Common myeloid progenitor, CD34-positive (primary cell): ENCODE measurements at regions of chr11 and their contacts with region 1.

Region 1: DNA sequence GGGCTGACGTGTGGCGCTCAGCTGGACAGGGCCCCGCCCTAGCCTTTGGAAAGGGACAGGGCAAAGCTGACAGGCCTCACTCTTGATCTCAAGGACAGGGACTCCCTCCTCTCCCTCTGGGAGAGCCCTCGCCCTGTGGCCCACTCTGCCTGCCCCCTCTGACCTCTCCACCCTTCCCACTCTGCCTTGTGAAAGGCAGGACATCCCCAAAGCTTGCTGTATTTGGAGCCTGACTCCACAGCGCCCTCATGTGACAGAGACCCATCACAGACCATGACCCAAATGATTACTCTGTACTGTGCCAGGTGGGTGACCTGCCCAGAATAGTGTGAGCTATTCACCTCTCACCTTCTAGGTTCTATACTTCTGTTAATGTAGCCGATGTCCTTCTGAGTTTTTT is 18.8 kb downstream of the P2RY2 start:
- DNase-seq: peak; percentile 57 to 79 (median 70)
- H3K4me3 ChIP-seq: no peak overlapping the region
- H3K27ac ChIP-seq: no peak overlapping the region
- H3K4me1 ChIP-seq: no peaks in the 10 kb centered on the region
- H3K27me3 ChIP-seq: no peaks in the 10 kb centered on the region

Region 2: DNA sequence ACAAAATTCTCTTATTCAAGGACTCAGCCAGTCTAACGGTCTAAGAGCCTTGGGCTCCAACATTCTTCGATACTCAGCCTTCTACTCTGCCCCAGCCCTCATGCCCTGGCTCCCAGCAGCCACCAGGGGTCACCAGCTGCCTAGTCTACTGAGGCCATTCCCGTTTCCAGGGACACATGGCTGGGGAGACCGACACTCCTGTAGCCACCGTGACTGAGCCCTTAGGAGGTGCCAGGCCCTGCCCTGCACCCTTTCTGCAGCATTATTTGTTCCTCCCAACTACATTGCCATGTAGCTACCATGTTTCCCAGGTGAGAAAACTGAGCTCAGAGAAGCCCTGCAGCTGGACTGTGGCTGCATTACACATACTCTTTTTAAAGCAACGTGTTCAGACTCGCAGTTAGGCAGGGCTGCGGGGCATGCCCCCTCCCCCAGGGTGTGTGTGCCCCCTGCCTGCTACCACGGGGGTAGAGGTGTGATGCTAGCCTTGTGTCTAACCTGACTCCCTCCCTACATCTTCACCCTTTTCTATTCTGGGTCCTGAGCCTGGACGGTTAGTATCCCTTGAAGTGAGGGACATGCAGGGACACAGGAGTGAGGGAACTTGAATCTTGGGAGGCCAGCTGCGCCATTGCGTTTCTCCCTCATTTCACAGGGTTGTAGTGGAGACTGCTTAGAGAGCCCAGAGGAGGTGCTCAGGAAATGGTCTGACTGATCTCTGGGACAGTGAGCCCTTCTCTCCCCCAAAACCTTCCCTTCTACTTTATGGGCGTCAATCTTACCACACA is 405.1 kb before region 1 on chr11:
- CTCF ChIA-PET with region 1: interaction called, 10 read pairs
- POLR2A ChIA-PET with region 1: no interaction called
- DNase-seq: peak; percentile 62 to 81 (median 79)
- H3K4me3 ChIP-seq: no peak overlapping the region
- H3K27ac ChIP-seq: no peak overlapping the region
- H3K4me1 ChIP-seq: peaks cover 0 to 11% (median 4%) of the 10 kb centered on the region in 4 experiments
- H3K27me3 ChIP-seq: no peaks in the 10 kb centered on the region

Region 3: GRCh38 chr11:72985645-72986044 is 251.2 kb before region 1 on chr11:
- CTCF ChIA-PET with region 1: no interaction called
- POLR2A ChIA-PET with region 1: no interaction called
- DNase-seq: no peak
- H3K4me3 ChIP-seq: no peak overlapping the region
- H3K27ac ChIP-seq: no peak overlapping the region
- H3K4me1 ChIP-seq: peaks cover 0 to 20% (median 8%) of the 10 kb centered on the region in 4 experiments
- H3K27me3 ChIP-seq: no peaks in the 10 kb centered on the region

Region 4: DNA sequence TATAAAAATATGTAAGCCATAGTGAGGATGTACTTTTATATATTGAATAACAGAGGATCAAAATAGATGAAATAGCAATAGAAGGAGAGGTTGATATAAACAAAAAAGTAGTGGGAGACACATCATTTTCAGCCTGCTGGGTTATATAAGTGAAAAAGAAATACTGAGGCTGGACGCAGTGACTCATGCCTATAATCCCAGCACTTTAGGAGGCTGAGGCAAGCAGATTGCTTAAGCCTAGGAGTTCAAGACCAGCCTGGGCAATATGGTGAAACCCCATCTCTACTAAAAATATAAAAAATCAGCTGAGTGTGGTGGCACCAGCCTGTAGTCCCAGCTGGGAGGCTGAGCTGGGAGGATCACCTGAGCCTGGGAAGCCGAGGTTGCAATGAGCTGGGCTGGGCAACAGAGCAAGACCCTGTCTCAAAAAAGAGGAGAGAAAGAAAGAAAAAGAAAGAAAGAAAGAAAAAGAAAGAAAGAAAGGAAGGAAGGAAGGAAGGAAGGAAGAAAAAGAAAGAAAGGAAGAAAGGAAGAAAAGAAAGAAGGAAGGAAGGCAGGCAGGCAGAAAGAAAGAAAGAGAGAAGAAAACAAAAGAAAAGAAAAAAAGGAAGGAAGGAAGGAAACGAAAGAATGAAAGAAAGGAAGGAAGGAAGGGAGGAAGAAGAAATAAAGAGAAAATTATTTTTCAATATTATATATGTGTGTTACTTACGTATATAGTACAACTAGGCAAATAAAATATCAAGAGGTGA is 25.8 kb before region 1 on chr11:
- CTCF ChIA-PET with region 1: interaction called, 14 read pairs
- POLR2A ChIA-PET with region 1: no interaction called
- DNase-seq: no peak
- H3K4me3 ChIP-seq: no peak overlapping the region
- H3K27ac ChIP-seq: no peak overlapping the region
- H3K4me1 ChIP-seq: peaks cover 0 to 27% (median 2%) of the 10 kb centered on the region in 4 experiments
- H3K27me3 ChIP-seq: no peaks in the 10 kb centered on the region

Region 5: GRCh38 chr11:73218106-73218829 is 18.6 kb before region 1 on chr11 and contains the start of gene P2RY2:
- CTCF ChIA-PET with region 1: interaction called, 14 read pairs
- POLR2A ChIA-PET with region 1: no interaction called
- DNase-seq: peak; percentile 56 to 75 (median 69)
- H3K4me3 ChIP-seq: peak within 1 kb of the TSS; percentile 21 to 78 (median 64)
- H3K27ac ChIP-seq: no peak within 1 kb of the TSS
- H3K4me1 ChIP-seq: peaks cover 0 to 44% (median 14%) of the 10 kb centered on the region in 4 experiments
- H3K27me3 ChIP-seq: peaks cover 0 to 17% (median 5%) of the 10 kb centered on the region in 5 experiments

Region 6: DNA sequence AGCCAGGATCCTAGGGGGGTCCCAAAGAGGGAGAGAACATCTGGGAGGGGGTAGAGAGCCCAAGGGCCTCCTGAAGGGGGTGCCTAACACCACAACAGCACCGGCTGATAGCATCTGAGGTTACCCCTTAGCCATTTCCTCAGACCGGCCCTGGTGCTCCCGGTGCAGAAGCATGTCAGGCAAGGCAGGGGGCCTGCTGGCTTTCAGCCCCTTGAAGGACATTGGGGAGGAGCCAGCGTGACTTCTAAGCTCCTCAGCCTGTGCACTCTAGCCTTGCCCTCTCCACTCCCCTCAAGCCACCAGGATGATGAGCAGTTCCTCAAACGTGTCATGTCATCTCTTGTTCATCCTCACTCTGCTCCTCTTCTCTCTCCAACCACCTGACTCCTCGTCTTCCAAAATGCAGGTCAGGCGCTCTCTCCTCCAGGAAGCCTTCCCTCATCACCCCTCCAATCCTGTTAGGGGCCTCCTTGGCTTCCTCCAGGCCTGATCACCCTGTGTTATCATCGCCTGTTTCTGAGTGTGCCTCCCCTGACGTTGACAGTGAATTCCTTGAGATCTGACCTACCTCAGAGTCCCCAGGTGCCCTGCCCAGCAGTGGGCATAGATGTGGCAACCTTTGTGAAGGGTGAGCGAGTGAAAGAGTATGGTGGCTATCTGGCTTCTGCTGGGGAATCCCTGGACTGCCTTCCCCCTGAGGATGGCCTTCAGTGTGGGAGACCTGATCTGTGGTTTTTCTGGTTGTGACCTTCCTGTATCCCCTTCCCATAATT is 12.7 kb before region 1 on chr11:
- CTCF ChIA-PET with region 1: interaction called, 13 read pairs
- POLR2A ChIA-PET with region 1: no interaction called
- DNase-seq: peak; percentile 14 to 51 (median 47)
- H3K4me3 ChIP-seq: no peak overlapping the region
- H3K27ac ChIP-seq: no peak overlapping the region
- H3K4me1 ChIP-seq: peaks cover 0 to 30% (median 17%) of the 10 kb centered on the region in 4 experiments
- H3K27me3 ChIP-seq: peaks cover 0 to 6% (median 3%) of the 10 kb centered on the region in 5 experiments

Region 7: GRCh38 chr11:73265853-73266645 is 29.2 kb after region 1 on chr11:
- CTCF ChIA-PET with region 1: interaction called, 12 read pairs
- POLR2A ChIA-PET with region 1: no interaction called
- DNase-seq: no peak
- H3K4me3 ChIP-seq: no peak overlapping the region
- H3K27ac ChIP-seq: no peak overlapping the region
- H3K4me1 ChIP-seq: peaks cover 0 to 23% (median 7%) of the 10 kb centered on the region in 4 experiments
- H3K27me3 ChIP-seq: peaks cover 0 to 35% (median 12%) of the 10 kb centered on the region in 5 experiments